Cardiac septum (tissue), 1 donor: ENCODE measurements at regions of chr10 and their contacts with region 1.

Region 1: DNA sequence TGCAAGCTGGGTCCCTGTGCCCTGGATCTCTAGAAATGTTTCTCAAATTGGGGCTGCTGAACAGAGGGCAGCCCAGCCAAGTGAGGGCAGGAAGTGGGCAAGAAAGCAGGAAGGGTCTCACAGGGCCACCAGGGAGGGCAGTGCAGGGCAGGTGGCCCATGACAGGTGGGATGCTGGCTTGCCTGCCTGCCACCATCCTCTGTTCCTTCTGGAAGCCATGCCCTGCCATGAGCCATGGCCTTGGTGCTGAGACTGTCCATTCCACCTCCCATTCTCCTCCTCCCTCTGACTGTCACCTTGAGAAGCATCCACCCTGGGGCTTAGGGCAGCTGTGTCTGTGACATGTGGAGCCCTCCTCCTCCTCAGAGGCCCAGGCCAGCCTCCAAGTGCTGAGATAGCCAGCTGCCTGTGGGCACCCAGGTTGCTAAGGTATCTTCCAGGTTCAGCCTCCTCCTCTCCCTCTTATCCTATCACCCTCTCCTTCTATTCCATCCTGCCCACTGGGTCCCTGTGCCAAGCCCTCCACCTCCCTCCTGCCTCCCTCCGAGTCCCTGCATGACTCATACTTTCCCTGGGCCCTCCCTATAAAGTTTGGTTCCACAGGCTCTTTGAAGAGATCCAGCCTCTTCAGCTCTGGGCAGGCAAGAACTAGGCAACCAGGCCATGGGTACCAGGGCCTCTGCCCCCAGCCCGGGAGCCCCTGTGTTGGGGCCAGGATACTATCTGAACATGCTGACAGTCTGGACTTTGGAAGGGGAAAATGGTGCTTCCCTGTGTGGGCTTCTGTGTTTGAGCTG is 1.3 kb downstream of the VSIR start:
- DNase-seq: peak; percentile 89

Region 2: DNA sequence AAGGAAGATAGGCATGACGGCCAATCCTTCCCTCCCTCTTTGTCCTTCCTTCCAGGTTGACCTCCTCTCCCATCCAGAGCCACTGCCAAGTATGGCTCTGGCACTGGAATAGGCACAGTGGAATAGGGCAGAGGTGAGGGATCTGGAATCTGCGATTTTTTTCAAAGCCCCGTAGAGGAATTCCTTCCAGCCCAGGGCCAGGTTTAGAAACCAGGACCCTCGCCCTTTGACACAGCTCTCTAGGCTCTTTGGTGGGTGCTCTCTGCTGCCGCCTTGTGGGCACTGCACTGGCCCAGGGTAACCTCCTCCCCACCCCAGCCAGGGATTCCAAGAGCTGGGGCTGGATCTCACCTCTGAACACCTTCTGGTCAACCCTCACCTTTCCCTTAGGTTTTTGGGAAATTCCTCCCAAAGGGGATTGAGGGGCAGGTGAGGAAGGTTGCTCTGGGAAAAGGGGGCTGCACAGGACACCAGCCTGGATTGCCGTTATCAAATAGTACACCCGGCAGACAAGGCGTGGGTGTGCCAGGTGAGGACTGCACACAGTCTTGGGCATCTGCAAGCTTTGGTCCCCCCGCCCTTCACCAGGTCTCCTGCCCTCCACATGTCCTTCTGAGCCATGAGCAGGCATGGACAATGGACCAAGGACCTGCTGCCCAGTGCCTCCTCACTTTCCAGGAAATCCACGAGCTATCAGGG is 75.2 kb before region 1 on chr10:
- intact Hi-C with region 1: loop called (anchors 5 kb)
- DNase-seq: no peak

Region 3: DNA sequence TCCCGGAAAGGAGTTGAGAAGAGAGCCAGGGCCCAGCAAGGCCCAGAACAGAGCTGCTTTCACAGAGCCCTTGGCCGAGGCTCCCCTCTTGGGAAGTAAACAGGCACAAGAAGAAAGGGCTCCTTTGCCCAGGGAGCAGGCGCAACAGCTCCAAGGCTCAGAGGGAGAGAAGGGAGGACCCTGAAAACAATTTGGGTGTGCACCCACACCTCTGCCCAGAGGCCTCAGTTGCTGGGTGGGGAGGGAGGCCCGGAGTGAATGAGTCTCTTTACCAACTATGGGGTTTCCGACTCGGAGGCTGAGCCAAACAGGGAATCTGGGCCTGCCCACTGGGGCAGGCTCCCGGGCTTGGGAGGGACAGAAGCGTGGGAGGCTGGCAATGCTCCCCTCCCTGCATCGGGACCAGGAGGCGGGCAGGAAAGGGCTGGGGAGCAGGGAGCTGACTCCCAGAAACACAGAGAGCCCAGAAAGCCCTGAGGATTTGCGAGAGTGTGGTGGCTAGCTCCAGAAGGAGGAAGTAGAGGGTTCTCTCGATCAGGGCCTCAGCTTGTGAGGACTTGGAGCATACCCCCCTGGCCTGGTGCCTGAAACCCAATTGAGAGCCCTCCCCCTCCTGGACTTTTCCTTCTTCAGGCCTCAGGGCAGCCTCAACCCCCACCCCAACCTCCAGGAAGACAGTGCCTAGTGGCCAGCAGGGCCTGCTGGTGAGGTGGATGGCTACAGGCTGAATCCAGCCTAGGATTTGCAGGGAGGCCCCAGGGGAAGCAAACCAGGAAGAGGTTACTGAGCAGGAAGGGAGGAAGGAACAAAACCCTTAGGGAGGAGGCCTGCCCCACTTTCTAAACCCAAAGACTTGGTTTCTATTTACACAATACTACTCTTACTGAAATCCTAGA is 58.6 kb before region 1 on chr10:
- intact Hi-C with region 1: loop called (anchors 2 kb)
- DNase-seq: peak; percentile 90

Region 4: GRCh38 chr10:71727738-71728737 is 44.0 kb before region 1 on chr10:
- intact Hi-C with region 1: loop called (anchors 5 kb)
- DNase-seq: peak; percentile 91

Region 5: DNA sequence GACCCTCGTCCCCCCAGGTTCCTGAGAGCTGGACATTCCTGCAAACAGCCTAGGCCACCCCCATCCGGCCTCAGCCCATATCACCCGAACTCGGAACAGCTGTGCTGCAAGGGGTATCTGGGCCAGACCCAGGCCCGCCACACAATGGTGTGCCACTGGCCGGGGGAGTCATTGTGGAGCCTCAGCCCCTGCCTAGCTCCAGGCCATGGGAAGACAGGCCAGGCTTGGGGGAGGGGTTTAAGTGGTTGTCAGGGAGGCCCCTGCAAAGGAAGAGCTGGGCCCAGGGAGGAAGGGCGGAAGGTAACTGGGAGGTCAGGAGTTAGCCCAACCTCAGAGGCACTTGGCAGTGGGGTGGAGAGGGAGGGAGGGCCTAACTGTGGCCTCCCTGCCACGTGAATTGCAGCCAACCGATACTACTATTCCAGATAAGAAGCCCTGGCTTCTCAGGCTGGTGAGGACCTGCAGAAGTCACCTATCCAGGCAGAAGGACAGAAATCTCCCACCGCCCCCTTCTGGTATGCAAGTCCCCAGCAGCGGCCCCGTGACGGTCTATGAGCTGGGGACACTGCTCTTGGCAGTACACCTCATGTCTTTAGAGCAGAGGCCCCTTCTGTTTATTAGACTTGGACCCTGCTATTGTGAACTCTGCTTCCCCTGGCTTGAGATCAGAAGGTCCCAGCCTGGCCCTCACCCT is 25.5 kb before region 1 on chr10:
- intact Hi-C with region 1: loop called (anchors 2 kb)
- DNase-seq: peak; percentile 86

Region 6: DNA sequence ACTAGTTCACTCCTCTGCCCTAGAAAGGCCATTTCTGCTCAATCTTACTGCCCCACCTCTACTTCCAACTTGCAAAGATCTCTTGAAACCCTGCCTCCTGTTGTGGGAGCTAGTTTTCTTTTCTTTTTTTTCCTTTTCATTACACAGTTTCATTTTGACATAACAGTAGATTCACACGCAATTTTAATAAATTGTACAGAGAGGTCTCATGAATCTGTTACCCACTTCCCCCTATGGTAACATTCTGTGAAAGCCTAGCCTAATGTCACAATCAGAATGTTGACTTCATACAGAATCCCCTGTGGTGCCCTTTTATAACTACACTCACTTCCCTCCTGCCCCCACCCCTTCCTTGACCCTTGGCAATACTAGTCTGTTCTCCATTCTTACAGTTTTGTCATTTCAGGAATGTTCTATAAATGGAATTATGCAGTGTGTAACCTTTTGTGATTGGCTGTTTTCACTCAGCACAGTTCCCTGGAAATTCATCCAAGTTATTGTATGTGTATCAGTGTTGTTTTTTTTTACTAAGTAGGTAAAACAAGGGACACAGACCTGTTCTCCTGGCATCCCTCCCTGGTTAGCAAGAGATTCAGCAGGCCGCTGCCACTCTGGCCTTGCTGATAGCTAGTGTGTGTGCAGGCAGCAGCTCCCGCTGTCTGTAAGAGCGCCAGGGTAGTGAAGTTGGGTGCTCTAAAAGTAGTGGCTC is 213.7 kb after region 1 on chr10:
- intact Hi-C with region 1: no loop called
- DNase-seq: no peak

Region 7: GRCh38 chr10:72248468-72249151 is 476.6 kb after region 1 on chr10:
- intact Hi-C with region 1: no loop called
- DNase-seq: peak; percentile 90